ENCODE measurements at regions of chr19 and their contacts with region 1.

Region 1: DNA sequence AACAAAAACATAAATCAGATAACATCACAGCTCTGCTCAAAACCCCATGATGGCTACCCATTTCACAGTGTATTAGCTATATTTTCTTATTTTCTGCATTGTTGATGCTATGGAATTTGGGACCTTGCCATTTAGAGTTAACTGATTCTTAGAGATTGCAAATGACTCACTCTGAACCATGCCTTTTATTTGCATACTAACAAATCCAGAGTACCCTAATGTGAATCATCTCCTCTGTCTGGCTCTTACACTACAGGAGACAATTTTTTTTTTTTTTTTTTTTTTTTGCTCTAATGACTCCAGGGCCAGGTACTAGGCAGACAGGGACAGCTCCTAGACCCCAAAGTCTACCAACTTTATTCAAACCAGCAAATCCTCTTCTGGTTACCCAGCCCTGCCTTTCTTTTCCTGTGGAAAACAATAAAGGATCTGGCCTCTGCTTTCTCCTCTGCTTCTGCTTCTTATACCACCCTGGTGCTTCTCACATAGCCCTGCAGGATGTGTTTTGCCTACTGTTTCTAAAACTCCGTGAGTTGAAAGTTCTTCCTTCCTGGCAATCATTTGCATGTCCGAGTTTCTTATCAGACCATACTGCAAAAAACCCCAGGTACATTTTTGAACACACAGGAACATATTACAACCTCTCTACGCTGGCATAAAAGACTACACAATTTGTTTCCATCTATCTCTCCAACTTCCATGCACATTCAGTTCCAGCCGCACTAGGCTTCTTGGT is 10.6 kb upstream of the ZNF460 start:
- DNase-seq: no peak
- H3K4me3 Mint-ChIP-seq: no peak overlapping the region
- H3K27ac Mint-ChIP-seq: no peak overlapping the region
- H3K4me1 Mint-ChIP-seq: no peaks in the 10 kb centered on the region
- H3K27me3 Mint-ChIP-seq: no peaks in the 10 kb centered on the region
- CTCF ChIP-seq: no peak

Region 2: GRCh38 chr19:57233207-57233606 is 36.5 kb before region 1 on chr19:
- CTCF ChIA-PET with region 1: interaction called, 10 read pairs
- intact Hi-C with region 1: no loop called
- DNase-seq: no peak
- H3K4me3 Mint-ChIP-seq: no peak overlapping the region
- H3K27ac Mint-ChIP-seq: no peak overlapping the region
- H3K4me1 Mint-ChIP-seq: no peaks in the 10 kb centered on the region
- H3K27me3 Mint-ChIP-seq: no peaks in the 10 kb centered on the region
- CTCF ChIP-seq: no peak

Region 3: GRCh38 chr19:57245959-57246358 is 23.7 kb before region 1 on chr19:
- CTCF ChIA-PET with region 1: no interaction called
- intact Hi-C with region 1: no loop called
- DNase-seq: no peak
- H3K4me3 Mint-ChIP-seq: no peak overlapping the region
- H3K27ac Mint-ChIP-seq: no peak overlapping the region
- H3K4me1 Mint-ChIP-seq: peaks cover 8% of the 10 kb centered on the region
- H3K27me3 Mint-ChIP-seq: no peaks in the 10 kb centered on the region
- CTCF ChIP-seq: no peak

Region 4: DNA sequence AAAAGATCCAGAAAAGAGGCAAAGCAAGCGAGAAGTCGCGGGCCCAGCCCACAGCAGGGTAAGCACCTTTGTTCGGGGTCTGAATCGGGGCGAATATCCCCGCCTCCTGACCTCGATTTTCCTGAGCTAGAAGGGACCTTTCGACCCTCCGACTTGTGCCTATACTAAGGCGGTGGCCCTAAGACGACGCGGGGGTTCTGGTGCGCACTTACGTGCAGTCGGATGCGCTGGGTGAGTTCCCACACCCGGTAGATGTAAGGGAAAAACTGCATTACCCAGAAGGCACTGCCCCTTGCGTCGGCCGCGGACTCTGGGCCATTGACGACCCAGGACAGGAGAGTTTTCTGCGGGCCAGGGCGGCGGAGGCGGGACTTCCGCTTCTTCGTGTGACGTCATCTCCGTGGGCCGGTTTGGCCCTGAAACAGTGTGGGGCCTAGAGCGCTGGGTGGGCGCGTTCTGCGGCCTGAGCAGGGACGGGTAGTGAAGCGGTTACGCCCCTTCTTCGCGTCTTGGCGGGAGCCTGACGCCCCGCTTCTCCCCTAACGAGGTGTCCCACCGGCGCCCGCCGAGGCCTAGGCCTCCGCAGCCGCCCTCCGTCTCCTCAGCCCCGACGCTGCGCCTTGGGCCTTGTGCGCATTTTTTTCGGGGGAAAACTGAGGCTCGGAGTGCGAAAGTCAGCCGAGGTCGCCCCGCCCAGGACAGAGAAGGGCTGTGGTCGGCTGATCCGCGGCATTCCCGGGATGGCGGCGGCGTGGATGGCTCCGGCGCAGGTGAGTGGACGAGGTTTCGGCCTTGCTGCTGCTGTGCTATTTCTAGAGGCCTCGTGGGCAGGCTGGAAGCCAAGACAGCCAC is 10.6 kb after region 1 on chr19 and contains the start of gene ZNF460:
- CTCF ChIA-PET with region 1: no interaction called
- intact Hi-C with region 1: no loop called
- DNase-seq: peak; percentile 98
- H3K4me3 Mint-ChIP-seq: no peak within 1 kb of the TSS
- H3K27ac Mint-ChIP-seq: no peak within 1 kb of the TSS
- H3K4me1 Mint-ChIP-seq: peaks cover 12% of the 10 kb centered on the region
- H3K27me3 Mint-ChIP-seq: no peaks in the 10 kb centered on the region
- CTCF ChIP-seq: no peak
- total RNA-seq, gene ZNF460: 68.2 and 74.8 TPM in 2 replicates